ENCODE measurements at regions of chr10 and their contacts with region 1.

Region 1: GRCh38 chr10:72273410-72274212 is at the start of gene DDIT4:
- DNase-seq: peak; percentile 95 to 98 (median 96)
- H3K4me3 ChIP-seq: peak within 1 kb of the TSS; percentile 99 to 100
- H3K4me3 Mint-ChIP-seq: peak within 1 kb of the TSS; percentile 96 to 100 (median 98)
- H3K27ac ChIP-seq: peak within 1 kb of the TSS; percentile 99
- H3K27ac Mint-ChIP-seq: peak within 1 kb of the TSS; percentile 83 to 99 (median 96)
- H3K4me1 ChIP-seq: peaks cover 51% of the 10 kb centered on the region
- H3K4me1 Mint-ChIP-seq: peaks cover 23 to 60% (median 39%) of the 10 kb centered on the region in 4 donors
- H3K27me3 ChIP-seq: no peaks in the 10 kb centered on the region
- H3K27me3 Mint-ChIP-seq: no peaks in the 10 kb centered on the region
- total RNA-seq, gene DDIT4: 23.1 to 24.5 TPM

Region 2: DNA sequence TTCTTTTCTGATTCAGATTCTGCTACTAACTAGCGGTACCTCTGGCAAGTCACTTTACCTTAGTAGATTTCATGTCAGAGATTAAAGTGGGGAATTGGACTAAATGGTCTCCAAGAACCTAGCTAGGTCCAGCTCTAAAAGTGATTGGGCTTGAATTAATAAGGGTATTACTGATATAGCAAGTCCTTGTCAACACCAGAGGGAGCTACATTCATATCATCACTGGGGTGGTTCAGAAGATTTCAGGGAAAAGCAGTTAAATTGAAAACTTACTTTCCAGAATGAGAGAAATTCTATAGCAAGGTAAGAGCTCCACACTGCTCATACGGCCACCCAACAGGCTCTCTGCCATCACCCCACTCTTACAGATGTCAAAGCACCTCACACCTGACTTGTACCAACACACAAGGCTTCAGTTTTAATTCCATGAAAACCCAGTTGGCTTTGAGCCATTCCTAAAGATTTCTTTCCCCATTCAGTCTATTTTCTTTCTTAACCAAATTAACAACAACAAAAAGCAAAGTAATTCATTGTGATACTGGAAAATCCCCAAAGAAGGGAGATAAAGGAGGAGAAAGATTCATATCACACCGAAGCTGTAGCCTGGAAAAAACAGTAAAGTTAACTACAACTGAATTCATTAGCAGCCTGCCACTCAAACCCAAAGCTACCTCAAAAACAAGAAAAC is 147.3 kb before region 1 on chr10:
- CTCF ChIA-PET with region 1: interaction called, 24 read pairs
- POLR2A ChIA-PET with region 1: interaction called, 3 read pairs
- intact Hi-C with region 1: no loop called
- DNase-seq: peak in 3 of 5 donors; percentile 16 to 28 (median 25)
- H3K4me3 ChIP-seq: no peak overlapping the region
- H3K4me3 Mint-ChIP-seq: no peak overlapping the region
- H3K27ac ChIP-seq: no peak overlapping the region
- H3K27ac Mint-ChIP-seq: peak overlapping the region in 5 of 7 donors; percentile 25 to 87 (median 38)
- H3K4me1 ChIP-seq: peaks cover 29% of the 10 kb centered on the region
- H3K4me1 Mint-ChIP-seq: peaks cover 24 to 34% (median 26%) of the 10 kb centered on the region in 4 donors
- H3K27me3 ChIP-seq: no peaks in the 10 kb centered on the region
- H3K27me3 Mint-ChIP-seq: no peaks in the 10 kb centered on the region

Region 3: GRCh38 chr10:72254813-72255568 is 18.6 kb before region 1 on chr10:
- CTCF ChIA-PET with region 1: interaction called, 38 read pairs
- POLR2A ChIA-PET with region 1: interaction called, 161 read pairs
- intact Hi-C with region 1: no loop called
- DNase-seq: peak in 3 of 5 donors; percentile 12 to 27 (median 26)
- H3K4me3 ChIP-seq: peak overlapping the region in 1 of 2 donors; percentile 13
- H3K4me3 Mint-ChIP-seq: peak overlapping the region; percentile 59 to 89 (median 70)
- H3K27ac ChIP-seq: peak overlapping the region; percentile 46
- H3K27ac Mint-ChIP-seq: peak overlapping the region; percentile 69 to 91 (median 86)
- H3K4me1 ChIP-seq: peaks cover 91% of the 10 kb centered on the region
- H3K4me1 Mint-ChIP-seq: peaks cover 50 to 88% (median 69%) of the 10 kb centered on the region in 4 donors
- H3K27me3 ChIP-seq: no peaks in the 10 kb centered on the region
- H3K27me3 Mint-ChIP-seq: no peaks in the 10 kb centered on the region

Region 4: DNA sequence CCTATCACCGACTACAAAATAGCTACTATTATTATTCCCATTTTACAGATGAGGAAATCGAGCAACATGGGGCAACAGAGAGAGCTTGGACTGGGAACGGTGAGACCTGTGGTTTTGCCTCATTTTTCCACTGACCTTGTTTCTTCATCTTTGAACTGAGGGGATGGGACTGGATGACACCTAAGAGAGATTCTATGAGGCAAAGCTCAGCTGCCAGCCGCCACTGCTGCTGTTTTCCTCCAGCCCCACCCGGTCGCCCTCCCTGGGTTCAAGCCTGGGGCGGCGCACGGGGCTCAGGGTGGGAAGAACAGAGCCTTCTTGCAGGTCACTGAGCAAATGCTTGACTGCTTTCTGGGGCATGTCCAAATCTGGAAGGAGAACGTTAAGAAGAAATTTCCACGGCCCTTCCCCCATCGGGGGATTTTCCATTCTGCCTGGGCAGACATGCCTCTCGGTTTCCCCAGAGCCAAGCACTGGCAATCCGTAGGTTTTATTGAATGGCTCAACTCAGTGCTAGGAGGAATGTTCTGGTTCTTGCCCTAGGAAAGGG is 12.4 kb after region 1 on chr10:
- CTCF ChIA-PET with region 1: interaction called, 24 read pairs
- POLR2A ChIA-PET with region 1: interaction called, 70 read pairs
- intact Hi-C with region 1: no loop called
- DNase-seq: no peak
- H3K4me3 ChIP-seq: no peak overlapping the region
- H3K4me3 Mint-ChIP-seq: peak overlapping the region in 3 of 8 donors; percentile 2 to 73 (median 11)
- H3K27ac ChIP-seq: no peak overlapping the region
- H3K27ac Mint-ChIP-seq: peak overlapping the region; percentile 19 to 92 (median 87)
- H3K4me1 ChIP-seq: peaks cover 31% of the 10 kb centered on the region
- H3K4me1 Mint-ChIP-seq: peaks cover 26 to 46% (median 37%) of the 10 kb centered on the region in 4 donors
- H3K27me3 ChIP-seq: no peaks in the 10 kb centered on the region
- H3K27me3 Mint-ChIP-seq: no peaks in the 10 kb centered on the region

Region 5: GRCh38 chr10:72297968-72298773 is 24.6 kb after region 1 on chr10:
- CTCF ChIA-PET with region 1: interaction called, 26 read pairs
- POLR2A ChIA-PET with region 1: interaction called, 104 read pairs
- intact Hi-C with region 1: loop called (anchors 1 kb)
- DNase-seq: peak; percentile 89 to 95 (median 91)
- H3K4me3 ChIP-seq: peak overlapping the region in 1 of 2 donors; percentile 71
- H3K4me3 Mint-ChIP-seq: peak overlapping the region; percentile 29 to 94 (median 86)
- H3K27ac ChIP-seq: peak overlapping the region; percentile 95
- H3K27ac Mint-ChIP-seq: peak overlapping the region; percentile 96 to 100 (median 100)
- H3K4me1 ChIP-seq: peaks cover 56% of the 10 kb centered on the region
- H3K4me1 Mint-ChIP-seq: peaks cover 26 to 67% (median 46%) of the 10 kb centered on the region in 4 donors
- H3K27me3 ChIP-seq: no peaks in the 10 kb centered on the region
- H3K27me3 Mint-ChIP-seq: no peaks in the 10 kb centered on the region

Region 6: GRCh38 chr10:72319416-72320254 is 46.0 kb after region 1 on chr10:
- CTCF ChIA-PET with region 1: interaction called, 51 read pairs
- POLR2A ChIA-PET with region 1: interaction called, 156 read pairs
- intact Hi-C with region 1: loop called (anchors 1 kb)
- DNase-seq: peak; percentile 87 to 91 (median 89)
- H3K4me3 ChIP-seq: peak overlapping the region; percentile 46 to 55
- H3K4me3 Mint-ChIP-seq: peak overlapping the region; percentile 79 to 89 (median 84)
- H3K27ac ChIP-seq: peak overlapping the region; percentile 89
- H3K27ac Mint-ChIP-seq: peak overlapping the region; percentile 96 to 99 (median 99)
- H3K4me1 ChIP-seq: peaks cover 95% of the 10 kb centered on the region
- H3K4me1 Mint-ChIP-seq: peaks cover 53 to 92% (median 74%) of the 10 kb centered on the region in 4 donors
- H3K27me3 ChIP-seq: no peaks in the 10 kb centered on the region
- H3K27me3 Mint-ChIP-seq: no peaks in the 10 kb centered on the region